MCF 10A (cell line): ENCODE measurements at regions of chr7 and their contacts with region 1.

Region 1: GRCh38 chr7:36366718-36367560 is 22.7 kb upstream of the ANLN start:
- DNase-seq: peak; percentile 87
- H3K4me3 Mint-ChIP-seq: peak overlapping the region; percentile 80
- H3K27ac Mint-ChIP-seq: peak overlapping the region; percentile 70
- H3K4me1 Mint-ChIP-seq: no peaks in the 10 kb centered on the region
- H3K27me3 Mint-ChIP-seq: no peaks in the 10 kb centered on the region
- CTCF ChIP-seq: peak; percentile 83

Region 2: GRCh38 chr7:36430186-36430585 is 63.2 kb after region 1 on chr7:
- CTCF ChIA-PET with region 1: interaction called, 7 read pairs
- POLR2A ChIA-PET with region 1: no interaction called
- intact Hi-C with region 1: loop called (anchors 5 kb)
- DNase-seq: no peak
- H3K4me3 Mint-ChIP-seq: no peak overlapping the region
- H3K27ac Mint-ChIP-seq: peak overlapping the region; percentile 23
- H3K4me1 Mint-ChIP-seq: peaks cover 5% of the 10 kb centered on the region
- H3K27me3 Mint-ChIP-seq: no peaks in the 10 kb centered on the region
- CTCF ChIP-seq: no peak